Activated CD8-positive, alpha-beta T cell treated with anti-CD3 and anti-CD28 coated beads, Interleukin-2, amount 10 ng/mL, durations not matched to agents 7 days and 5 days (primary cell): ENCODE measurements at regions of chr6 and their contacts with region 1.

Region 1: GRCh38 chr6:27795697-27796494 is 116.3 kb downstream of the OR2B2 start:
- DNase-seq: peak; percentile 83
- ATAC-seq: peak; percentile 52
- H3K4me3 Mint-ChIP-seq: peak overlapping the region; percentile 1
- H3K27ac Mint-ChIP-seq: no peak overlapping the region
- H3K4me1 Mint-ChIP-seq: peaks cover 49% of the 10 kb centered on the region
- H3K27me3 Mint-ChIP-seq: peaks cover 13% of the 10 kb centered on the region

Region 2: DNA sequence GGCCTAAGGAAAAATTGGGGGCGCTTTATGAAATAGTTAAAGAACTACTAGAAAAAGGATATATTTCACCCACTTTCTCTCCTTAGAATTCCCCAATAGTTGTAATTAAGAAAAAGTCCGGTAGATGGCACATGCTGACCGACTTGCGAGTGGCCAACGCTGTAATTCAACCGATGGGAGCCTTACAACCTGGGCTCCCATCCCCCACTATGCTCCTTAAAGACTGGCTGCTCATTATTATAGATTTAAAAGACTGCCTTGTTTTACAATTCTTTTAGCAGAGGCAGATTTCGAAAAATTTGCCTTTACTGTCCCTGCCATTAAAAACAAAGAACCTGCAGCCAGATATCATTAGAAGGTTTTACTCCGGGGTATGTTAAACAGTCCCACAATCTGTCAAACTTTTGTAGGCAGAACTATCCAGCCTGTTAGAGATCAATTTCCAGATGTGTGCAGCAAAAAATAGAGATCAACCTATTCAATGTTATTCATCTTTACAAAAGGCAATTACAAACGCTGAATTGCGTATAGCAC is 606.9 kb before region 1 on chr6:
- CTCF ChIA-PET with region 1: interaction called, 11 read pairs
- POLR2A ChIA-PET with region 1: no interaction called
- DNase-seq: peak; percentile 69
- ATAC-seq: peak; percentile 90
- H3K4me3 Mint-ChIP-seq: peak overlapping the region; percentile 84
- H3K27ac Mint-ChIP-seq: peak overlapping the region; percentile 50
- H3K4me1 Mint-ChIP-seq: peaks cover 16% of the 10 kb centered on the region
- H3K27me3 Mint-ChIP-seq: no peaks in the 10 kb centered on the region

Region 3: GRCh38 chr6:27470023-27470422 is 325.9 kb before region 1 on chr6:
- CTCF ChIA-PET with region 1: no interaction called
- POLR2A ChIA-PET with region 1: no interaction called
- DNase-seq: no peak
- ATAC-seq: no peak
- H3K4me3 Mint-ChIP-seq: peak overlapping the region; percentile 7
- H3K27ac Mint-ChIP-seq: no peak overlapping the region
- H3K4me1 Mint-ChIP-seq: peaks cover 48% of the 10 kb centered on the region
- H3K27me3 Mint-ChIP-seq: peaks cover 4% of the 10 kb centered on the region

Region 4: DNA sequence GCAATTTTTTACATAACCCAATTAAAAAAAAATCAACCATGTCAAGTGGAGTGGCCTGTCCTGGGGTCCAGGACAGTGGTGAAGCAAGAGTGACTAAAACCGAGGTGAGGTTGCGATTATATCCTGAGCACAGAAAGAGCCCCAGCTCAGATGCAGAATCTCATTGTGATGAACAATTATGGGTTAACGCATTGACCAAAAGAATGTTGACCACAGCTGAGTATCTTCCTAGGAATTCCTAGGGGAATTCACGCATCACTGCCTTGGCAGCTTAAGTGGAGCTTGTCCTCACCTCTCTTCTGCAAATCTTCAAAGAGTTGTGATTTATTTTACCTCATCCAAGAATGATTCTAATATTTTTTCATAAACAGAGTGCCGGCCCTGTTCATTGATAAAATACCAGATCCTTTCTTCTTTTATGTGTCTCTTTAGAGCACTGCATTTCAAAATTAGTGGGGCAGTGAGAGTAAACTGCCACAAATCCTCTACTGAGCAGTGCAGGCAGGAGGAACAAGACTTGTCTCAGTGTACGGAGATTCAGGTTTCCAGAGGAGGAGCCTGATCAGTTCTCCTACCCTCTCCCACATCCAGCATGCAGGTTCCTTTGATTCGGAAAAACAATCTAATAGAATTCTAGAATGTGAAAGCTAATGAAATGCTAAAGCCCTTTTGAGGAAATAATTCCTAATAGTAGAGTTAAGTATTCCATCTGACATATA is 262.9 kb before region 1 on chr6:
- CTCF ChIA-PET with region 1: no interaction called
- POLR2A ChIA-PET with region 1: no interaction called
- DNase-seq: no peak
- ATAC-seq: no peak
- H3K4me3 Mint-ChIP-seq: no peak overlapping the region
- H3K27ac Mint-ChIP-seq: no peak overlapping the region
- H3K4me1 Mint-ChIP-seq: no peaks in the 10 kb centered on the region
- H3K27me3 Mint-ChIP-seq: peaks cover 30% of the 10 kb centered on the region

Region 5: DNA sequence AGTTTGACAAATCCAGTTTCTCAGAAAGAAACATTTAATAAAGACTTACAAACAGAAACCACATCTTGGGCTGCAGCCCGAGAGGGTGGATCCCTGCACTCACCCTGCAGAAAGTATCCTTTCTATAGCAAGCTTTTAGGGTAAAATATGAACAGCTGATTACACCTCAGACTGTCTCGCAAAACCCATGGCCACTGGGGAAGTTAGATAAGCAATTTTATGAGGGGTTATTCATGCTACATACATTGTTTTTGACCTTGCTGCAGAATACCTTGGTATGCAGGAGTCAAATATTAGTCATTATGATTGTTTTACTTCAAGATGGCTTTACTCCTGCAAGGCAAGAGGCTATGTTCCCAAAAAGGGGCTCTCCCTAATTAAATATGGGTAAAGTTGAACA is 10.6 kb before region 1 on chr6:
- CTCF ChIA-PET with region 1: interaction called, 13 read pairs
- POLR2A ChIA-PET with region 1: no interaction called
- DNase-seq: no peak
- ATAC-seq: no peak
- H3K4me3 Mint-ChIP-seq: no peak overlapping the region
- H3K27ac Mint-ChIP-seq: no peak overlapping the region
- H3K4me1 Mint-ChIP-seq: no peaks in the 10 kb centered on the region
- H3K27me3 Mint-ChIP-seq: peaks cover 31% of the 10 kb centered on the region